H1 (cell line): ENCODE measurements at regions of chr5 and their contacts with region 1.

Region 1: DNA sequence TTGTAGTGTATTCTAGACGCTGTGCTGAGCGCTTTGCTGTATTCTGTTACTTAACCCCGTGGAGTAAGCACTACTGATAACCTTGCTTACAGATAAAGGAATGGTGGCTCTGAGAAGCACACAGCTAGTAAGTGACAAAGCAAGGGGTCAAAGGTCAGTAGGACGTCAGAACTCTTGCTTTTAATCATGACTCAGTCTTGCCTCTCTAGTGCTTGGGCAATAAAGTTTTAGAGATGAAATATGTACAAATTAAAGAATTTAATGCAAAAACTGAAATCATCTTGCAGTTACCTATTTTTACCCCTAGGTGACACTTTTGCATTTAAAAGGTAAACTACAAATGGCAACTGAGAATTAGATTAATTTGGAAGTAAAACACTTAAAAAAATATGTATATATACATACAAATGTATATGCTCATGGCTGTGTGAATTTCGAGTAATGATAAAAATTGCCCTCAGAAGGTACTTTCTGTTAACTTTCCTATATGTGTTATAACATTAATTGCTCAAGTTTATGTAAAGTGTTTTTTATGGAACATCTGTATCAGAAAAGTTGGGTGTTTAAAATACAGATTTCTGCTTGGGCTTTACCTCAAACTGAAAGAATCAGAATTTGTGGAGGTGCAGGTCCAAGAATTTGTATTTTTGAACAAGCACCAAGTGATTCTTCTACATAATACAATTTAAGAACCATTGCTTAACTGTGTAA is 175.1 kb upstream of the DAB2 start:
- DNase-seq: no peak
- H3K4me3 ChIP-seq: no peak overlapping the region
- H3K27ac ChIP-seq: no peak overlapping the region
- H3K4me1 ChIP-seq: no peaks in the 10 kb centered on the region
- H3K27me3 ChIP-seq: no peaks in the 10 kb centered on the region
- CTCF ChIP-seq: no peak; a peak in 1 of 4 replicates
- EP300 ChIP-seq: no peak
- POLR2A ChIP-seq: no peak
- RAD21 ChIP-seq: peak in 1 of 2 experiments; percentile 47; a peak in 3 of 4 replicates

Region 2: DNA sequence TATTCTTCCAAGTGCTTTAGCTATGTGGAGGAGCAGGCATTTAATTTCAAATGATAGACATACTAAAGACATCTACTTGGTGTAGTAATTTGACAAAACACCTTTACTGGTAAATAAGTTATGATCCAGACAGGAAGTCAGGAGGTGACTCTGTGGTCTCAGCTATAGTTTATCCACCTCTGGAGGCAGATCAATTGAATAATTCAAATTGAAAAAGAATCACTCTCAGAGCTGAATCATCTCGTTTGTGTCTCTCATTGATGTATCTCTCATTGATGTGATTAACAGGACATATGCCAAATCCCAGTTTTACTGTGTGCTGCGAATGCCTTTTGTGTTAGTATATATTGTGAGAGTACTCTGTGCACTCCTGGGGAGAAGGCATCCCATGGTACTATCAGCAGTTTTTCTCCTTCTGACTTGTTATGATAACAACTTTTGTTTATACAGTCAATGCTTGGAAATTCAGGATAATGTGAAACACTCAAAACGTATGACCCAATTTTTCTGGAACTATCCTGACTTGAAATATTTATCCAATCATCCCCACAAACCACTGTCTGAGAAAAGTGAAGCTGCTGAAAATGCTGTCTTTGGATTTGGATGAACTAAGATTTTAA is 126.6 kb before region 1 on chr5:
- CTCF ChIA-PET with region 1: no interaction called
- POLR2A ChIA-PET with region 1: no interaction called
- DNase-seq: no peak
- H3K4me3 ChIP-seq: no peak overlapping the region
- H3K27ac ChIP-seq: no peak overlapping the region
- H3K4me1 ChIP-seq: no peaks in the 10 kb centered on the region
- H3K27me3 ChIP-seq: no peaks in the 10 kb centered on the region
- CTCF ChIP-seq: no peak
- EP300 ChIP-seq: no peak
- POLR2A ChIP-seq: no peak
- RAD21 ChIP-seq: no peak

Region 3: GRCh38 chr5:39578887-39579497 is 20.9 kb before region 1 on chr5:
- CTCF ChIA-PET with region 1: interaction called, 17 read pairs
- POLR2A ChIA-PET with region 1: no interaction called
- DNase-seq: no peak
- H3K4me3 ChIP-seq: no peak overlapping the region
- H3K27ac ChIP-seq: no peak overlapping the region
- H3K4me1 ChIP-seq: no peaks in the 10 kb centered on the region
- H3K27me3 ChIP-seq: no peaks in the 10 kb centered on the region
- CTCF ChIP-seq: peak in 1 of 3 experiments; percentile 21; a peak in 2 of 4 replicates
- EP300 ChIP-seq: no peak
- POLR2A ChIP-seq: no peak
- RAD21 ChIP-seq: peak in 1 of 2 experiments; percentile 56; a peak in 3 of 4 replicates

Region 4: GRCh38 chr5:39584927-39585326 is 14.9 kb before region 1 on chr5:
- CTCF ChIA-PET with region 1: interaction called, 16 read pairs
- POLR2A ChIA-PET with region 1: no interaction called
- DNase-seq: no peak
- H3K4me3 ChIP-seq: no peak overlapping the region
- H3K27ac ChIP-seq: no peak overlapping the region
- H3K4me1 ChIP-seq: no peaks in the 10 kb centered on the region
- H3K27me3 ChIP-seq: no peaks in the 10 kb centered on the region
- CTCF ChIP-seq: no peak
- EP300 ChIP-seq: no peak
- POLR2A ChIP-seq: no peak
- RAD21 ChIP-seq: no peak

Region 5: GRCh38 chr5:39691993-39692392 is 92.1 kb after region 1 on chr5:
- CTCF ChIA-PET with region 1: interaction called, 15 read pairs
- POLR2A ChIA-PET with region 1: no interaction called
- DNase-seq: no peak
- H3K4me3 ChIP-seq: no peak overlapping the region
- H3K27ac ChIP-seq: no peak overlapping the region
- H3K4me1 ChIP-seq: no peaks in the 10 kb centered on the region
- H3K27me3 ChIP-seq: no peaks in the 10 kb centered on the region
- CTCF ChIP-seq: peak in 2 of 3 experiments; percentile 38 to 59; a peak in 3 of 4 replicates
- EP300 ChIP-seq: no peak
- POLR2A ChIP-seq: no peak
- RAD21 ChIP-seq: peak; percentile 50 to 60